MCF 10A (cell line): ENCODE measurements at regions of chr4 and their contacts with region 1.

Region 1: DNA sequence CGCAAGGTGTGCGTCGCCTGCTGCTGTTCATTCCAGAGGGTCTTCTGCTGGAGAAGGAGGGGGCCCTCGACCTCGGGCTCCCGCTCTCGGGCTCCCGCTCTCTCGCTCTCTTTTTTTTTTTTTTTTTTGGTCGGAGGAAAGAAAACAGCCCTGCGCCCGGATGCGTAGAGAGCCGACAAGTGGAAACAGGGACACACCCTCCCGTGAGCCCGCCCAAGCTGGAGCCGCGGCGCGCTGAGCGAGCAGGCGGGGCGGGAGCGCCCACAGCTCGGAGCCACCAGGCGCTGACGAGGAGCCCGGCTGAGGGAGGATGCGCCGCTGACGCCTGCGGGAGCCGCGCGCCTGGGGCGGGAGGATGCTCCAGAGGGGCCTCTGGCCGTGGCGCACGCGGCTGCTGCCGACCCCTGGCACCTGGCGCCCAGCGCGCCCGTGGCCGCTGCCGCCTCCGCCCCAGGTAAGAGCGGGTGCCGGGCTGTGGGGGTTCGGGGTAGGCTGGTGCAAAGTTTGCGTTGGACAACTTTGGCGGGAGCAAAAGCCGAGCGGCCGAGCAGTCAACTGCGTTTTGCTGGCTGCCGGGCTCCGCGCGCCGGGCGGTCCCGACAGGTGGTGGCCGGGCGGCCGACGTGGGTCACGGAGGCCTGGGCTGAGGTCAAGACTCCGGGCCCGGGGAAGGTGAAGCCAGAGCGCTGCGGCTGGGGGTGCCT is at the start of gene MCUB:
- DNase-seq: peak; percentile 92
- H3K4me3 Mint-ChIP-seq: peak within 1 kb of the TSS; percentile 80
- H3K27ac Mint-ChIP-seq: peak within 1 kb of the TSS; percentile 66
- H3K4me1 Mint-ChIP-seq: peaks cover 10% of the 10 kb centered on the region
- H3K27me3 Mint-ChIP-seq: no peaks in the 10 kb centered on the region
- CTCF ChIP-seq: no peak
- total RNA-seq, gene MCUB: 11.0 and 16.3 TPM in 2 replicates

Region 2: GRCh38 chr4:109315818-109316217 is 244.3 kb before region 1 on chr4:
- CTCF ChIA-PET with region 1: no interaction called
- POLR2A ChIA-PET with region 1: no interaction called
- intact Hi-C with region 1: no loop called
- DNase-seq: no peak
- H3K4me3 Mint-ChIP-seq: no peak overlapping the region
- H3K27ac Mint-ChIP-seq: no peak overlapping the region
- H3K4me1 Mint-ChIP-seq: no peaks in the 10 kb centered on the region
- H3K27me3 Mint-ChIP-seq: no peaks in the 10 kb centered on the region
- CTCF ChIP-seq: no peak

Region 3: DNA sequence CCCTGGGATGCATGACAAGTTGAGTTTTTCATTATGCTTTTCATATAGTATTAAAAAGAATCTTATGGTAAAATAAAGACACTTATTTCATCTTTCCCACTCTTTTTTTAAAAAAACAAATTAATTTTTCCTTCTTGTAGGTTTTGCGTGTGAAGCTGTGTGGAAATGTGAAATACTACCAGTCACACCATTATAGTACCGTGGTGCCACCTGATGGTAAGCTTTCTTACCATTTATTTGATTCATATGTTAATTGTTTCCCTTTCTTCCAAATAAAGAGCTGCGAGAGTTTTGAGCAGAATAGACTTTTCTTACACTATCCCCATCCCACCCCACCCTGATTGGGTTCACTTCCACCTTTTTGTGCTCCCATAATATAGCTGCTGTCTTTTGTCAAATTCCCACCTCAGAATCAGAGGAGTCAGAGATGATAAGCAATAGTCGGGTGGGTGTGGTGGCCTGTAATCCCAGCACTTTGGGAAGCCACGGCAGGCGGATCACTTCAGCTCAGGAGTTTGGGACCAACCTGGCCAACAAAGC is 98.8 kb after region 1 on chr4:
- CTCF ChIA-PET with region 1: no interaction called
- POLR2A ChIA-PET with region 1: interaction called, 3 read pairs
- intact Hi-C with region 1: loop called (anchors 5 kb)
- DNase-seq: peak; percentile 1
- H3K4me3 Mint-ChIP-seq: no peak overlapping the region
- H3K27ac Mint-ChIP-seq: no peak overlapping the region
- H3K4me1 Mint-ChIP-seq: no peaks in the 10 kb centered on the region
- H3K27me3 Mint-ChIP-seq: no peaks in the 10 kb centered on the region
- CTCF ChIP-seq: no peak

Region 4: DNA sequence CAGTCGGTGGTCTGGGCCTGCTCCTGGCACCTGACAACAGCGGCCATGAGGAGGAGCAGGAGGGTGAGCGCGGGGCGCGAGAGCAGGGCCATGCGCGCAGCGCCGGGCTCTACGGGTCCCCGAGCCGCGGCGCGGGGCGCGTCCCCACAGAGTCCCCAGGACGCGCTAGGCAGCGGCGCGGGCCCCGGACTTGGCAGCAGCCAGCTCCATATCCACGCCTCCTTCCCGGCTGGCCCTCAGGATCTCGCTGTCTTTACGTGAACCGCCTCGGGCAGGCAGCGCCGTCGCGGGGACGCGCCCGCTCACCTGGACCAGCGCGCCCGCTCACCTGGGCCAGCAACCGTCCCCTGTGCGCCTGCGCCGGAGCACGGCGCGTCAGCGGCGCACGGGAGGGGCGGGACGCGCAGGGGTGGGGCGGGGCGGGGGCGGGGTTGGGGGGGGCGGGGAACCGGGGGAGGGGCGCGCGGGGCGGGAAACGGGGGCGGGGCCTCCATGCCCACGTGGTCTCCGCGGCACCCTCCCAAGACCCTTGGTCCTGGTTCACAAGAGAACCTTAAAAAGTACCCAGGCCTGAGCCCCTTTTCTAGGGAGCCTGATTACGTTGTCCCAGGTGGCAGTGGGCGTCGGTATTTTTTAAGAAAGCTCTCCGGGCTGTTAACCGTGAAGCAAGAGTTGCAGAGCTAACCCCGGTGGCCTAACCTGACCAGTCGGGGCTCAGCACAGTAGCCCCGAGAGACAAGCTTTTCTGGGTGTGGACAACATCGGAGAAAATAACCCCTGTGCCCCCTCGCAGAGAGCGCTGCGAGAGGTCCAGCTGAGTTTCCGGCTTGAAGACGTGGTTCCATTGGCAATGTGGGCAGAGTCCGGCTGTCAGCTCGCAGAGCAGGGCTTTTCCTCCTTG is 169.8 kb after region 1 on chr4 and contains the start of gene PLA2G12A:
- CTCF ChIA-PET with region 1: no interaction called
- POLR2A ChIA-PET with region 1: interaction called, 13 read pairs
- intact Hi-C with region 1: no loop called
- DNase-seq: peak; percentile 90
- H3K4me3 Mint-ChIP-seq: peak within 1 kb of the TSS; percentile 88
- H3K27ac Mint-ChIP-seq: peak within 1 kb of the TSS; percentile 52
- H3K4me1 Mint-ChIP-seq: peaks cover 18% of the 10 kb centered on the region
- H3K27me3 Mint-ChIP-seq: no peaks in the 10 kb centered on the region
- CTCF ChIP-seq: no peak
- total RNA-seq, gene PLA2G12A: 52.4 and 58.0 TPM in 2 replicates

Region 5: GRCh38 chr4:109815151-109816081 is 255.3 kb after region 1 on chr4 and contains the start of gene GAR1:
- CTCF ChIA-PET with region 1: no interaction called
- POLR2A ChIA-PET with region 1: interaction called, 5 read pairs
- intact Hi-C with region 1: loop called (anchors 10 kb)
- DNase-seq: peak; percentile 94
- H3K4me3 Mint-ChIP-seq: peak within 1 kb of the TSS; percentile 96
- H3K27ac Mint-ChIP-seq: peak within 1 kb of the TSS; percentile 99
- H3K4me1 Mint-ChIP-seq: peaks cover 28% of the 10 kb centered on the region
- H3K27me3 Mint-ChIP-seq: no peaks in the 10 kb centered on the region
- CTCF ChIP-seq: no peak
- total RNA-seq, gene GAR1: 21.2 and 28.7 TPM in 2 replicates